Right cardiac atrium (tissue), 5 donors: ENCODE measurements at regions of chr17 and their contacts with region 1.

Region 1: GRCh38 chr17:44014437-44015172 is at the start of gene TMEM101:
- DNase-seq: peak; percentile 90 to 96 (median 95)
- ATAC-seq: peak; percentile 93
- H3K4me3 ChIP-seq: peak within 1 kb of the TSS; percentile 88
- H3K27ac ChIP-seq: peak within 1 kb of the TSS; percentile 68
- H3K4me1 ChIP-seq: peaks cover 2% of the 10 kb centered on the region
- H3K27me3 ChIP-seq: no peaks in the 10 kb centered on the region
- total RNA-seq, gene TMEM101: 13.7 to 21.1 (median 19.3) TPM

Region 2: GRCh38 chr17:43814714-43815113 is 199.9 kb before region 1 on chr17:
- intact Hi-C with region 1: no loop called
- DNase-seq: no peak
- ATAC-seq: no peak
- H3K4me3 ChIP-seq: no peak overlapping the region
- H3K27ac ChIP-seq: no peak overlapping the region
- H3K4me1 ChIP-seq: peaks cover 2% of the 10 kb centered on the region
- H3K27me3 ChIP-seq: no peaks in the 10 kb centered on the region

Region 3: GRCh38 chr17:44110823-44111633 is 96.4 kb after region 1 on chr17:
- intact Hi-C with region 1: loop called in 1 of 4 experiments (anchors 10 kb)
- DNase-seq: peak; percentile 99 to 100 (median 100)
- ATAC-seq: peak; percentile 86 to 88
- H3K4me3 ChIP-seq: peak overlapping the region; percentile 52
- H3K27ac ChIP-seq: peak overlapping the region; percentile 89
- H3K4me1 ChIP-seq: peaks cover 47% of the 10 kb centered on the region
- H3K27me3 ChIP-seq: no peaks in the 10 kb centered on the region